ENCODE measurements at regions of chr1 and their contacts with region 1.

Region 1: GRCh38 chr1:92831762-92832536 is at the start of gene RPL5:
- DNase-seq: peak; percentile 99
- H3K4me3 Mint-ChIP-seq: peak within 1 kb of the TSS; percentile 95
- H3K27ac Mint-ChIP-seq: peak within 1 kb of the TSS; percentile 99
- H3K4me1 Mint-ChIP-seq: peaks cover 42% of the 10 kb centered on the region
- H3K27me3 Mint-ChIP-seq: no peaks in the 10 kb centered on the region
- total RNA-seq, gene RPL5: 1,185 and 1,195 TPM in 2 replicates

Region 2: DNA sequence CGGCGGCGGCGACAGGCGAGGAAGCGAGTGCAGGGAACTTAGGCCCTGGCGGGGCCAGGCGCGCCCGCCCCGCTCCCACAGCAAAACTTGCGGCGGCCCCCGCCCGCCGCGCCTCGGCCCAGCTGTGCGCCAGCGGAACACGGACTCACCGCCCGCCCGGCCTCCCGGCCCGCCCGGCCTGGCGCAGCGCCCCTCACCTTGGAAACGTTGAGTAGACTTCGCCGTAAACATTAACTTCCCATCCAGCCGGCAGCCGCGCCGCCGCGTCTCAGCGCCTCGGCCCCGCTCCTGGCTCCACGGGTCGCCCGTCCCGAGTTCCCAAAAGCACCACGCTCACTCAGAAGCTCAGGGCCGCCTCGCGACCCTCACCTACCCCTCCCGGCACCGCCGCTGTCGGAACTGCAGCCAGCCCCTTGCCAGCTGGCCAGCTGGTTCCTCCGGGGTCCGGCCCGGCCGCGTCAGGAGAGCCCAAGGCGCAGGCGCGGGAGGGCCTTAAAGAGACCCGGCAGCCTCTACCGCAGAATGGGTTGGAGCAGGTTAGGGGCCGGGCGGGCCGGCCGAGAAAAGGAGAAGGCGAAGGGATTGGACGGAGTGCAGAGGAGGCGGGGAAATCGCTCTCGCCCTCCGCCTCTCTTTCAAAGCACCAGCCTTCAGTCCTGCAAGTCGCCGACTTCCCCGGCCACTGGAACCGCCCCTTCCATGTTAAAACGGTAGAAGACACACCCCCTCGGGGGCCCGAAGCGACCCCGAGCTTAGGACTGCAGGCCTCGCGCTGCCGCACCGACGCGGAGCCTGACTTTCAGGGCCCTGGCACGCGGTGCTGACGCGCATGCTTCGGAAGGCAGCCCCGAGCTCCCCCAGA is 47.1 kb before region 1 on chr1 and contains the start of gene EVI5:
- intact Hi-C with region 1: loop called (anchors 1 kb)
- DNase-seq: peak; percentile 46
- H3K4me3 Mint-ChIP-seq: peak within 1 kb of the TSS; percentile 66
- H3K27ac Mint-ChIP-seq: no peak within 1 kb of the TSS
- H3K4me1 Mint-ChIP-seq: peaks cover 14% of the 10 kb centered on the region
- H3K27me3 Mint-ChIP-seq: peaks cover 72% of the 10 kb centered on the region
- total RNA-seq, gene EVI5: 60.8 and 63.4 TPM in 2 replicates

Region 3: DNA sequence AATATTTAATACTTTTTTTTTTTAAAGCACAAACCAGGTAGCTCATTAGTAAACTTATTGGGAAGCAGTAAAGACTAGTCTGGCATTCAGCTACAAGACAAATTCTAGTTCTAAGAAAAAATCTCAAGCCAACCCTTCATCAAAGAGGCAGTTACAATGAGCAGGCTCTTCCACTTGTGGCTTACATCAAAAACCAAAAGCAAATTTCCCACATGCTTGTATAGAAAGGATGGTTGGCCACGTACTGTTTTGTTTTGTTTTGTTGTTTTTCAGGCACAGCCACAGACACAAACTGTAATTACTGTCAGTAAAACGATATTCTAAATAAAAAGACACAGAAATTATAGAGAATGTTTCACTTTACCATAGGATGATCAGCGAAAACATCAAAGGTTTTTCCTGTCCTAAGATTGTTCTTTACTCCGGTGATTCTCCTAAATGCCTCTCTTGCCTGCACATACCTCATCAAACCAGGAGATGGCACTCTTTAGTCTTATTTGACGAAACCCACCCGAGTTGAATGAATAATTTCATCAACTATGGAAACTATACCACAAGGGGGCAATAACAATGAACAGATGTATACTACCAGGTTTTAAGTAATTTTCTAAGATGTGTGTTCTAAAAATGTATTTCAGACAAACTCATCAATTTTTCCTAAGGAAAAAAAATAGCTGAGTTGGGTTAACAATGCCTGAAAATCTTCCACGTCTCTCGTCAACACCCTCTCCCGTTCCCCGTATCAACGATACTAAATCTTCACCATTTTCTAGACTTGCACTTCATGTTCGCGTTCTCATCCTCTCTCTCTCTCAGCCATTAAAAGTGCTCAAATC is 26.8 kb after region 1 on chr1:
- intact Hi-C with region 1: loop called (anchors 2 kb)
- DNase-seq: peak; percentile 45
- H3K4me3 Mint-ChIP-seq: peak overlapping the region; percentile 52
- H3K27ac Mint-ChIP-seq: peak overlapping the region; percentile 61
- H3K4me1 Mint-ChIP-seq: peaks cover 28% of the 10 kb centered on the region
- H3K27me3 Mint-ChIP-seq: no peaks in the 10 kb centered on the region

Region 4: GRCh38 chr1:92944901-92945747 is 113.2 kb after region 1 on chr1:
- intact Hi-C with region 1: no loop called
- DNase-seq: no peak
- H3K4me3 Mint-ChIP-seq: no peak overlapping the region
- H3K27ac Mint-ChIP-seq: no peak overlapping the region
- H3K4me1 Mint-ChIP-seq: peaks cover 55% of the 10 kb centered on the region
- H3K27me3 Mint-ChIP-seq: no peaks in the 10 kb centered on the region

Region 5: GRCh38 chr1:93179886-93180722 is 348.2 kb after region 1 on chr1 and contains the start of gene TMED5:
- intact Hi-C with region 1: loop called (anchors 10 kb)
- DNase-seq: peak; percentile 97
- H3K4me3 Mint-ChIP-seq: peak within 1 kb of the TSS; percentile 97
- H3K27ac Mint-ChIP-seq: peak within 1 kb of the TSS; percentile 99
- H3K4me1 Mint-ChIP-seq: peaks cover 52% of the 10 kb centered on the region
- H3K27me3 Mint-ChIP-seq: no peaks in the 10 kb centered on the region
- total RNA-seq, gene TMED5: 58.6 and 60.4 TPM in 2 replicates